ENCODE measurements at regions of chr1 and their contacts with region 1.

Region 1: DNA sequence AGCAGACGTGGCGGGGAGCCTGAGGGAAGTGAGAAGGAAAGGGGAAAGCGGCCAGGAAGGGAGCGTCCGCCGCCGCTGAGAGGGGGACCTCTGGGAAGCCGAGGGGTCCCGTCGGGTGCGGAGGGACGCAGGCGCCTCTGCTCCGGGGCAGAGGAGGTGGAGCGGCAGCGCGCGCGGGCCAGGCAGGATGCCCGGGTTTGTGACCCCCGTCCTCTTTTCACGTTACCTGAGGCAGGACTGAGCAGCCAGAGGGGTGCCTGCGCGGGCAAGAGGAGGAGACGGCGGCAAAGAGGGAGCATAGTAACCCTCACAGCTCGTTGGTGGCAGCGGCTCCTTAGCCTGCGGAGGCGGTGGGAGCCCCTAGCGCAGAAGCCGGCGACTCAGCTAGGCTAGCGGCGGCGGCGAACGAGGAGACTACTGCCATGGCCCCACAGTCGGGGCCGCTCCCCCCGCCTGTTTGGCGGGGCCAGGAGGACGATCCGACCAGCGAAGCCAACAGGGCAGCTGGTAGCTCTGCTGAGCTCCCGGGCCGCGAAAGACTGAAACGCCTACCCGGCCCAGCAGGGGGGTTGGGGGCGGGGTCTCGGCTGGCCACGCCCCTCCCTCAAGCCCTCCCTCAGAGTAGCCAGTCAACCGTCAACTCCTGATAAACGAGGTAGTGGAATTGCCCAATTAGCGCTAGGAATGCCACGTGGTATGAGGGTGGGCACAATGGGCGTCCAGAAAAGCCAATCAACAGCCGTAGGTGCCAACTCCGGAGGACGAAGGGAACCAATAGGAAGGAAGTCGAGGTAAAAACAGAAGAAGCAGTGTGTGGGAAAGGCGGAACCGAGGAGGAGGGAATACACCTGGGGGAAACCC is at the start of gene TESK2:
- DNase-seq: peak; percentile 95 to 98
- ATAC-seq: peak; percentile 96 to 97 (median 97)
- H3K4me3 ChIP-seq: peak within 1 kb of the TSS; percentile 93
- H3K27ac ChIP-seq: peak within 1 kb of the TSS; percentile 89
- H3K4me1 ChIP-seq: peaks cover 19% of the 10 kb centered on the region
- H3K27me3 ChIP-seq: no peaks in the 10 kb centered on the region
- CTCF ChIP-seq: no peak
- total RNA-seq, gene TESK2: 1.9 to 5.0 (median 2.3) TPM

Region 2: GRCh38 chr1:45359882-45360513 is 130.9 kb before region 1 on chr1:
- intact Hi-C with region 1: loop called (anchors 1 to 2 kb)
- DNase-seq: peak; percentile 49 to 76
- ATAC-seq: peak; percentile 75 to 89 (median 80)
- H3K4me3 ChIP-seq: peak overlapping the region; percentile 45
- H3K27ac ChIP-seq: peak overlapping the region; percentile 77
- H3K4me1 ChIP-seq: peaks cover 34% of the 10 kb centered on the region
- H3K27me3 ChIP-seq: no peaks in the 10 kb centered on the region
- CTCF ChIP-seq: peak; percentile 77

Region 3: DNA sequence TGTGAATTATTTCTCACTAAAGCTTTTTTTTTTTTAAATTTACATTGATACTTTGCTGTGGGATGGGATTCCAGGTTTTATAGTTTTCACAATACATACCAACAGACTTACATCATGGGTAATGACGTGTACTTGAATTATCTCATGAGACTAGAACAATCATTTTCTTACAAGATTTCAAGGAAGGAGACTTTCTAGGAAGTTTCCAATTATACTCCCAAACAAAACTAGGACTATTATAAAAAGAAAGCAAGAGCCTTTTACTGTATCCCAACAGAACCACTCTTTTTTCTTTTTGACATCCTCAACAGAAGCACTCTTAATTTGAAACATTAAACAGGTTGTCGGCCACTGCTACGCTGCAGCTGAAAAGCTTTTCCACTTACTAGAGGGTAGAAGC is 48.6 kb before region 1 on chr1:
- intact Hi-C with region 1: loop called in 1 of 2 experiments (anchors 5 kb)
- DNase-seq: no peak
- ATAC-seq: no peak
- H3K4me3 ChIP-seq: no peak overlapping the region
- H3K27ac ChIP-seq: no peak overlapping the region
- H3K4me1 ChIP-seq: peaks cover 3% of the 10 kb centered on the region
- H3K27me3 ChIP-seq: no peaks in the 10 kb centered on the region
- CTCF ChIP-seq: no peak

Region 4: GRCh38 chr1:45526179-45526578 is 35.3 kb after region 1 on chr1:
- intact Hi-C with region 1: no loop called
- DNase-seq: no peak
- ATAC-seq: no peak
- H3K4me3 ChIP-seq: no peak overlapping the region
- H3K27ac ChIP-seq: no peak overlapping the region
- H3K4me1 ChIP-seq: no peaks in the 10 kb centered on the region
- H3K27me3 ChIP-seq: no peaks in the 10 kb centered on the region
- CTCF ChIP-seq: no peak

Region 5: DNA sequence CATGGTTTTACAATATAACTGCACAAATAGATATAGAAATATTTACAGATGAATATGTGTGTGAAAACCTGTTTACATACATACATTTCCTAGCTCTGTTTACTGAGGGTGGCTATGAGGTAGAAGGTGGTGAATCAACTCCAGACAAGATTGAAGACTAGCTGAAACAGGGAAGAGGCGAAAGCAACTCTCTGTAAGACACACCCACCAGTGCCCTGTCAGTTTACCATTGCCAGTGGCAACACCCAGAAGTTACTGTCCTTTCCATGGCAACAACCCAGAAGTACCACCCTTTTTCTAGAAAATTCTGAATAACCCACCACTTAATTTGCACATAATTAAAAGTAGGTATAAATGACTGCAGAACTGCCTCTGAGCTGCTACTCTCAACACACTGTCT is 213.8 kb after region 1 on chr1:
- intact Hi-C with region 1: no loop called
- DNase-seq: no peak
- ATAC-seq: no peak
- H3K4me3 ChIP-seq: no peak overlapping the region
- H3K27ac ChIP-seq: no peak overlapping the region
- H3K4me1 ChIP-seq: no peaks in the 10 kb centered on the region
- H3K27me3 ChIP-seq: no peaks in the 10 kb centered on the region
- CTCF ChIP-seq: no peak

Measured in psoas muscle (tissue), 8 donors.